Panc1 (cell line): ENCODE measurements at regions of chr11 and their contacts with region 1.

Region 1: GRCh38 chr11:27281740-27282590 is 81.0 kb downstream of the CCDC34 start:
- DNase-seq: no peak
- ATAC-seq: peak; percentile 95
- H3K4me3 ChIP-seq: no peak overlapping the region
- H3K27ac ChIP-seq: peak overlapping the region; percentile 91
- H3K4me1 ChIP-seq: peaks cover 19% of the 10 kb centered on the region
- H3K27me3 ChIP-seq: no peaks in the 10 kb centered on the region
- CTCF ChIP-seq: no peak

Region 2: GRCh38 chr11:27020751-27021150 is 261.2 kb before region 1 on chr11:
- CTCF ChIA-PET with region 1: no interaction called
- POLR2A ChIA-PET with region 1: no interaction called
- in situ Hi-C with region 1: no loop called
- intact Hi-C with region 1: no loop called
- DNase-seq: no peak
- ATAC-seq: no peak
- H3K4me3 ChIP-seq: no peak overlapping the region
- H3K27ac ChIP-seq: no peak overlapping the region
- H3K4me1 ChIP-seq: no peaks in the 10 kb centered on the region
- H3K27me3 ChIP-seq: no peaks in the 10 kb centered on the region; the same call in 1 of the 2 replicates
- CTCF ChIP-seq: no peak

Region 3: GRCh38 chr11:27209562-27210005 is 72.4 kb before region 1 on chr11:
- CTCF ChIA-PET with region 1: no interaction called
- POLR2A ChIA-PET with region 1: no interaction called
- in situ Hi-C with region 1: no loop called
- intact Hi-C with region 1: loop called (anchors 5 kb)
- DNase-seq: peak; percentile 69
- ATAC-seq: peak; percentile 90
- H3K4me3 ChIP-seq: no peak overlapping the region
- H3K27ac ChIP-seq: peak overlapping the region; percentile 96
- H3K4me1 ChIP-seq: peaks cover 52% of the 10 kb centered on the region
- H3K27me3 ChIP-seq: no peaks in the 10 kb centered on the region
- CTCF ChIP-seq: no peak